Endothelial cell of umbilical vein (primary cell): ENCODE measurements at regions of chr6 and their contacts with region 1.

Region 1: GRCh38 chr6:89080542-89081422 is at the start of gene PNRC1:
- DNase-seq: peak; percentile 99
- H3K4me3 ChIP-seq: peak within 1 kb of the TSS; percentile 89 to 97 (median 94)
- H3K27ac ChIP-seq: peak within 1 kb of the TSS; percentile 92
- H3K4me1 ChIP-seq: peaks cover 11% of the 10 kb centered on the region
- H3K27me3 ChIP-seq: no peaks in the 10 kb centered on the region
- CTCF ChIP-seq: no peak
- POLR2A ChIP-seq: peak; percentile 91
- total RNA-seq, gene PNRC1: 87.9 and 88.4 TPM in 2 replicates

Region 2: GRCh38 chr6:88403486-88403885 is 677.3 kb before region 1 on chr6:
- CTCF ChIA-PET with region 1: no interaction called
- POLR2A ChIA-PET with region 1: no interaction called
- dilution Hi-C with region 1: no loop called
- intact Hi-C with region 1: no loop called
- DNase-seq: no peak
- H3K4me3 ChIP-seq: no peak overlapping the region
- H3K27ac ChIP-seq: no peak overlapping the region
- H3K4me1 ChIP-seq: no peaks in the 10 kb centered on the region
- H3K27me3 ChIP-seq: no peaks in the 10 kb centered on the region
- CTCF ChIP-seq: no peak
- POLR2A ChIP-seq: no peak

Region 3: DNA sequence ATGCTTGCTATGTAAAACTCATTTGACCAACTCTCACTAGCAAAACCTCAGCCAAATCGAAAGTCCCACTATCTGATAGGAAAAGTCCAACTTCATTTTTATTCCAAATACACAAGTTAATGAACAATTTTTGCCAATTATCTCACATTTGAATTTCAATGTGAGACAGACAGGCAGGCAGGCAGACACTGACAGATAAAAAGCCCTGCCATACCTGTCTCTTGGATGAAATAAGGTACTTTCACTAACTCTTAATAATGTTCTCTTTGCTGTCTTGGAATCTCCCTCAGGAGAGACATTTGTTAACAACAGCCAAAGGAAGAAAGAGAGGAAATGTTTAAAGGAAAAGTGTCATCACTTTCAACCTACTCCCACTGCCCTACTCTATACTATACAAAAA is 199.3 kb before region 1 on chr6:
- CTCF ChIA-PET with region 1: no interaction called
- POLR2A ChIA-PET with region 1: no interaction called
- dilution Hi-C with region 1: no loop called
- intact Hi-C with region 1: no loop called
- DNase-seq: no peak
- H3K4me3 ChIP-seq: no peak overlapping the region
- H3K27ac ChIP-seq: no peak overlapping the region
- H3K4me1 ChIP-seq: no peaks in the 10 kb centered on the region
- H3K27me3 ChIP-seq: no peaks in the 10 kb centered on the region
- CTCF ChIP-seq: no peak
- POLR2A ChIP-seq: no peak

Region 4: DNA sequence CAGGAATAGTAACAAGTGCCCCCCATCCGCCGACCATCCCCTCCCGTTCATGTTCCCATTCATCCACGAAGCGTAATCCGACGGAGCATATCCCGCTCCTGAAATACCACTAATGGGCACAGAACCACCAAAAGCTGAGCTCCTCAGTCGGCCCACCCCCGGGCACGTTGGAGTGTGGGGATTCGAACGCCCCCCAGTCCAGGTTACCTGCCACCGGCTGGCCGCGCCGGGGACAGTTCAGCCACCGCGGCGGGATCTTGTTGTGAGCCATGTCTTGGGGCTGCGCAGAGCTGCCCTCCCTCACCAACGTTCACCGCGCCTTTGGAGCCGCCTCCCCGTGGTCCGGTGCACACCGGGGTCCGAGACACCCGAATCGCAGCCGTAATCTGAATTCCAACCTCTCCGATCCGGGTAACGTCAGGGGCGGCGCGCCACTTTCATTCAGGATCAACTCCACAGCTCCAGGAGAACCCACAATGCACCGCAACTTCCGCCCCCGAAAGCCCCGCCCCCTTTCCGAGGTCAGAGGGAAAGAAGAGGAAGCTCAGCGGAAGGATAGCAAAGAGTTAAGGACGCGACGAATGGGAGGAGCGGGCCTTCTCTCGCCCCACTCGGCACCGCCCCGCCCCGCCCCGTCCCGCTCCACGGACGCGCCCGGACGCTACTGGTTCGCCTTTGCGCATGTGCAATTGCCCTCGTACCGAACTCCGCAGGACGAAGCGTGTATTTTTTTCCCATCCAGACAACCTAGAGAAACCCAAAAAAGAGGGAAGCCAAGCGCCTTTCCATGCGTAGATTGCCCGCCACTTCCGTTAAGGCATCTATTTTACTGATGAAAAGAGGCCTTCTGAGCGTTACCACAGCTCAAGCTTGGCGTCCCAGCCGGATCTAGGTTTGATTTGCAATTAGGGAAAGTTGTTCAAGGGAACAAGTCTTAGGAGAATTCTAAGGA is 117.4 kb before region 1 on chr6 and contains the start of gene RNGTT:
- CTCF ChIA-PET with region 1: no interaction called
- POLR2A ChIA-PET with region 1: interaction called, 3 read pairs
- dilution Hi-C with region 1: no loop called
- intact Hi-C with region 1: loop called (anchors 1 kb)
- DNase-seq: peak; percentile 98
- H3K4me3 ChIP-seq: peak within 1 kb of the TSS; percentile 93 to 99 (median 96)
- H3K27ac ChIP-seq: peak within 1 kb of the TSS; percentile 71
- H3K4me1 ChIP-seq: peaks cover 12% of the 10 kb centered on the region
- H3K27me3 ChIP-seq: no peaks in the 10 kb centered on the region
- CTCF ChIP-seq: no peak
- POLR2A ChIP-seq: peak; percentile 50
- total RNA-seq, gene RNGTT: 13.1 and 13.5 TPM in 2 replicates

Region 5: GRCh38 chr6:89145787-89146646 is 65.2 kb after region 1 on chr6 and contains the start of gene PM20D2:
- CTCF ChIA-PET with region 1: interaction called, 3 read pairs
- POLR2A ChIA-PET with region 1: interaction called, 9 read pairs
- dilution Hi-C with region 1: no loop called
- intact Hi-C with region 1: loop called (anchors 1 kb)
- DNase-seq: peak; percentile 63
- H3K4me3 ChIP-seq: peak within 1 kb of the TSS; percentile 52 to 83 (median 79)
- H3K27ac ChIP-seq: peak within 1 kb of the TSS; percentile 72
- H3K4me1 ChIP-seq: peaks cover 10% of the 10 kb centered on the region
- H3K27me3 ChIP-seq: peaks cover 5 to 7% of the 10 kb centered on the region in 2 experiments
- CTCF ChIP-seq: no peak
- POLR2A ChIP-seq: peak; percentile 44
- total RNA-seq, gene PM20D2: 8.3 and 10.9 TPM in 2 replicates

Region 6: GRCh38 chr6:89297695-89298351 is 217.0 kb after region 1 on chr6:
- CTCF ChIA-PET with region 1: interaction called, 8 read pairs
- POLR2A ChIA-PET with region 1: interaction called, 5 read pairs
- dilution Hi-C with region 1: no loop called
- intact Hi-C with region 1: loop called (anchors 1 kb)
- DNase-seq: peak; percentile 97
- H3K4me3 ChIP-seq: peak overlapping the region in 1 of 3 experiments; percentile 47
- H3K27ac ChIP-seq: peak overlapping the region; percentile 84
- H3K4me1 ChIP-seq: peaks cover 28% of the 10 kb centered on the region
- H3K27me3 ChIP-seq: no peaks in the 10 kb centered on the region
- CTCF ChIP-seq: no peak
- POLR2A ChIP-seq: no peak

Region 7: GRCh38 chr6:89398762-89399525 is 318.2 kb after region 1 on chr6:
- CTCF ChIA-PET with region 1: no interaction called
- POLR2A ChIA-PET with region 1: no interaction called
- dilution Hi-C with region 1: no loop called
- intact Hi-C with region 1: no loop called
- DNase-seq: no peak
- H3K4me3 ChIP-seq: no peak overlapping the region
- H3K27ac ChIP-seq: no peak overlapping the region
- H3K4me1 ChIP-seq: no peaks in the 10 kb centered on the region
- H3K27me3 ChIP-seq: peaks cover 0 to 4% of the 10 kb centered on the region in 2 experiments
- CTCF ChIP-seq: no peak
- POLR2A ChIP-seq: no peak

Region 8: GRCh38 chr6:89638320-89639195 is 557.8 kb after region 1 on chr6 and contains the start of gene LYRM2:
- CTCF ChIA-PET with region 1: no interaction called
- POLR2A ChIA-PET with region 1: no interaction called
- dilution Hi-C with region 1: no loop called
- intact Hi-C with region 1: loop called (anchors 2 kb)
- DNase-seq: peak; percentile 96
- H3K4me3 ChIP-seq: peak within 1 kb of the TSS; percentile 80 to 84 (median 83)
- H3K27ac ChIP-seq: peak within 1 kb of the TSS; percentile 92
- H3K4me1 ChIP-seq: peaks cover 12% of the 10 kb centered on the region
- H3K27me3 ChIP-seq: no peaks in the 10 kb centered on the region
- CTCF ChIP-seq: no peak
- POLR2A ChIP-seq: peak; percentile 85
- total RNA-seq, gene LYRM2: 37.7 and 41.9 TPM in 2 replicates